BJ (cell line): ENCODE measurements at regions of chr2 and their contacts with region 1.

Region 1: GRCh38 chr2:172113617-172114016 is 10.9 kb upstream of the DLX2 start:
- DNase-seq: no peak
- H3K4me3 ChIP-seq: no peak overlapping the region
- H3K27me3 ChIP-seq: no peaks in the 10 kb centered on the region
- CTCF ChIP-seq: peak; percentile 40

Region 2: DNA sequence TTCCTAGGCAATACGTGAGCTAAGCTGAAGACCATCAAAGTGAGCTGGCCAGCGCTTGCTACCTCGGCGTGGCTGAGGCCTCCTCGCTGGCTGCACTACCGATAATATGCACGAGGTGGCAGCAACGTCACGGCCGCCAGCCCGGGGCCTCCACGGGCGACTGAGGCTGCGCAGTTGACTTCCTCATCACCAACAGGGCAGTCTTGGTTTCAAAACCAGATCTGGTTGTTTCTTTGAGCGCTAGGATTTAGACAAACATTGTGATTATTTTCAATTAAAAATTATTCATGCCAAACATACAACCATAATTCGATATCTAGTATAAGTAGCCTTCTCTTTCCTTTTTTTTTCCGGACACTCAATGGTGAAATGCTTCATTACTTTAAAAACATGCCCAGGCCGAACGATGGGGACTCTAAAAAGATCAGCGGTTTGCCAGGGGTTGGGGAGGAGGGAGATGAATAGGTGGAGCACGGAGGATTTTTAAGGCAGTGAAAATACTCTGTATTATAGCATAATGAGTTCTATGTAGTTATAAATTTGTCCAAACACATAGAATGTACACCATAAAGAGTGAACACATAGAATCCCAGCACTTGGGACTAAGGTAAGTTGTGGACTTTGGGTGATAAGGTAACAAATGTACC is 539.3 kb before region 1 on chr2:
- CTCF ChIA-PET with region 1: interaction called, 23 read pairs
- POLR2A ChIA-PET with region 1: no interaction called
- DNase-seq: no peak
- H3K4me3 ChIP-seq: no peak overlapping the region
- H3K27me3 ChIP-seq: no peaks in the 10 kb centered on the region
- CTCF ChIP-seq: peak; percentile 97

Region 3: DNA sequence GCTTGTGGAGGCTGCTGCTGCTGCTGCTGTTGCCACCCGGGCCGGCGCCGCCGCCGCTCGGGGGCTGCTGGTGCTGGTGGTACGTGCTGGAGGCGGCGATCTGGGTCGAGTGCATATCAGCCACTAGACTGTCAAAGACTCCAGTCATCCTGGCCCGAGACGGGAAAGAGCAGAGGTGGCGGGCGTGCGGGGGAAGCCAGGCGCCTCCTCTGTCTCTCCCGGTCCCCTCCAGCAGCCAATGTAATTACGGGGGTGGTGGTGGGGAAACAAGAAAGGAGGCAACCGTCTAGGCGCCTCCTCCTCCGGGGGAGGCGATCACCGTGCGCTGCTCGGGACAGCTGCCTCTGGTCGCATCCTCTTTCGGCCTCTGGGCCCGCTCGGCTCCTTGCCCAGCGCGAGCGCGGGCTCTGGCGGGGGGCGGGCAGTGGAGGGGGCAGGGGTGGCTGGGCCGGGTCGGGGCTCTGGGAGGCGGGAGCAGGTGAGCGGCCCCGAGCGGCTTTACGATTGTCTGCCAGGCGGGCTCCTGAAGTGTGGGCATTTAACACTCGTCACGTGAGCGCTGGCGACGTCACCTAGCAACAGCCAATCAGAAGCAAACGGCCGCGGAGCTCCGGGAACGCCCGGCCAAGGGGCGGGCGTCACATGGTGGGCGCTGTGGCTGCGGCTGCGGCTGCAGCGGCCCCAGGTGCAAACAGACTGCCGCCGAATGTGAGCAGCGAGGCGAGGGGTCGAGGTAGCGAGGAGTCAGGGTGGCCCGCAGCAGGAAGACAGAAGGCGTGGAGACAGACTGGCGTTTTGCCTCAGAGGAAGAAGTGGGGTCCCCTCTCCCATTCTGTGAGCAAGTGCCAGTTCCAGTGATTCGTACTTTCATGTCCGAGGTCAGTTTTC is 11.0 kb before region 1 on chr2 and contains the start of gene DLX2:
- CTCF ChIA-PET with region 1: interaction called, 15 read pairs
- POLR2A ChIA-PET with region 1: no interaction called
- DNase-seq: no peak
- H3K4me3 ChIP-seq: peak within 1 kb of the TSS; percentile 49
- H3K27me3 ChIP-seq: no peaks in the 10 kb centered on the region
- CTCF ChIP-seq: no peak
- polyA plus RNA-seq, gene DLX2: 0.16 and 0.20 TPM in 2 replicates

Region 4: DNA sequence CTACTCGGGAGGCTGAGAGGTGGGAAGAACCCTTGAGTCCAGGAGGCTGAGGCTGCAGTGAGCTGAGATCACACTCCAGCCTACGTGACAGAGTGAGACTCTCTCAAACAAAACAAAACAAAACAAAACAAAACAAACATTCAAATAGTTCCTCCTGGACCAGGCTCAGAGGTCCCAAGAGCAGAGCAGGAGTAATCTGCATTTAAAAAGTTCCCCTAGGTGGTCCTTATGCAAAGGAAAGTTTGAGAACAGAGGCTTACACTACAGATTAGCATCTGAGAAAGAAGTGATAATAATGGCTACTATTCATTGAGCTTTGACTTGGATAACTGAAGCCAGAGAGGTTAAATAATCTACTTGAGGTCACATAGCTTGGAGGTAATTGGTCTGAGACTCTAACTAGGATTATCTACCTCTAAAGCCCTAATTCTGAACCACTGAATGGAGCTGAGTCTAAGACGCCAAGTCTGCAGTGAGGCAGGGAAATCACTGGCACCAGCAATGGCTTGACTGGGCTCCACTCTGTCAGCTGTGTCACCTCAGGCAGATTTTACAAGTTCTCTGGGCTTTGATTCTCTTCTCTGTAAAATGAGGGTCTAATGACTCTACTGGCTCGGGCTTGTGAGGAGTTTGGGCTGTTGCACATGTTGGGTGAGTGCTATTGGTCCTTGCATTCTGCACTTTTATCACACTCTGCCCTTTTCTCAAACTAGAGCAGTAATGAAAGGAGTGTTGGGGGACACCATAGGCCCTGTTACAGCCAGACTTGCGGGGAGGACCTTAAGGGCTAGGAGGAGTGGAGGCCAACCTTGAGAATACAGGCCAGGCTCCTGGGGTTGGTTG is 18.3 kb after region 1 on chr2:
- CTCF ChIA-PET with region 1: interaction called, 17 read pairs
- POLR2A ChIA-PET with region 1: no interaction called
- DNase-seq: no peak
- H3K4me3 ChIP-seq: no peak overlapping the region
- H3K27me3 ChIP-seq: no peaks in the 10 kb centered on the region
- CTCF ChIP-seq: no peak

Region 5: DNA sequence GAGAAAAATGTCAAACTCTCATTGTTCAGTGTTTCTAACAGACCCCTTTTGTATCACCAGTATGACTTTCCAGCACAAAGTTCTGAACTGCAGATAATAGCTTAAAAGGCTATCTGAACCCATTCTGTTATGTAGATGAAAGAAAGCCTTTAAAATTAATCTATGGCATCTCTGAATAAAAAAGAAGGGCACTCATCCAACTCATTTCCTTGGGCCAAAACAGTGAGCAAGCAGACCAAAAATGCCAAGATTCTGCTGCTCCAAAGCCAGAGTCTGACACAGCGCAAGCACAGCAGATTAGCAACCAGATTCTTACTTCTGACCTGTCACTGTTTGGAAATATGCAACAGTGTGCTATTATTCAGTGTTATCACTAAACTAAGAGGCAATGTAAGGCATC is 291.2 kb after region 1 on chr2:
- CTCF ChIA-PET with region 1: no interaction called
- POLR2A ChIA-PET with region 1: no interaction called
- DNase-seq: peak; percentile 47
- H3K4me3 ChIP-seq: no peak overlapping the region
- H3K27me3 ChIP-seq: no peaks in the 10 kb centered on the region
- CTCF ChIP-seq: no peak